Naive thymus-derived CD8-positive, alpha-beta T cell (primary cell): ENCODE measurements at regions of chr12 and their contacts with region 1.

Region 1: DNA sequence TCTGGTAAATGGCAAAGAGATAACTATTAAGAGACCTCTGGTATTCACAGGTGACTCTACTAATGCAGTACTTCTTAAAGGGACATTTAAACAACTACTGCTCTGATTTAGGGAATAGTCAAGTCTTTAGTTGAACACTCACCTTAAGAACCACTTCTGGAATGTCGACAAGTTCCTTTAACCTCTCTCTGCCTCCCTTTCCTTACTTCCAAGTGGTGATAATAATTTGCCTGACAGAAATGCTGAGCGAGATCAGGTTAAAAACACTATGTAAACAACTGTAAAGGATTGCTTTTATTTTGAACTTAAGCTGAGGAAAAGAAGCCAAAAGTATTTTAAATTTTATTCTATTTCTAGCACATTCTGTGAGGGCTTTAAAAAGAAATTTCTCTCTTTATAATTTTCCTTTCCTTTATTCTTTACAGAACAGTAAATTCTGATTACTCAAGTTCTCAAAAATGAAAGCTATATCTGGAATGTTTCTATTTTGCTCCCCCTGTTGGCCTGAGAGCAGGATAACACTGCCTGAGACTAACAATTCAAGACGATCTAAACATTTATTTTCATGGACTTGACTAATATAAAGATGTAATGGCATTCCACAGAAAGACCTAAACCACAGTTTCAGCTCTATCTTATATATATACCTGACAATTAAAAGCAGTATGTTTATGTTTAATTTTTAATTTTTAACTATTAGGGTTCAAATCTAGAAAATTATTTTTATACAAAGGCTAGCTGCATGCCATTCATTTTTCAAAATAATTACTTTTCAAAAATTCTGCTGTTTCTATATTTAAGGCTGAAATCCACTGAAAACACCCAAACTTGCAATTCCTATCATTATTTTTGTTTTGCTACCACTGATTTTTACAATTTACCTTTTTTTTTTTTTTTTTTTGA is 29.2 kb downstream of the ZCCHC8 start:
- DNase-seq: peak in 4 of 10 donors; percentile 17 to 72 (median 64)
- ATAC-seq: peak; percentile 71 to 78
- H3K4me3 Mint-ChIP-seq: no peak overlapping the region
- H3K27ac Mint-ChIP-seq: peak overlapping the region in 7 of 10 donors; percentile 14 to 79 (median 72)
- H3K4me1 Mint-ChIP-seq: peaks cover 4 to 8% (median 7%) of the 10 kb centered on the region in 4 donors
- H3K27me3 Mint-ChIP-seq: no peaks in the 10 kb centered on the region

Region 2: GRCh38 chr12:122318607-122319605 is 152.7 kb before region 1 on chr12:
- POLR2A ChIA-PET with region 1: no interaction called
- DNase-seq: no peak
- ATAC-seq: no peak
- H3K4me3 Mint-ChIP-seq: no peak overlapping the region
- H3K27ac Mint-ChIP-seq: peak overlapping the region in 2 of 10 donors; percentile 7 to 20
- H3K4me1 Mint-ChIP-seq: peaks cover 0 to 4% (median 0%) of the 10 kb centered on the region in 4 donors
- H3K27me3 Mint-ChIP-seq: no peaks in the 10 kb centered on the region

Region 3: DNA sequence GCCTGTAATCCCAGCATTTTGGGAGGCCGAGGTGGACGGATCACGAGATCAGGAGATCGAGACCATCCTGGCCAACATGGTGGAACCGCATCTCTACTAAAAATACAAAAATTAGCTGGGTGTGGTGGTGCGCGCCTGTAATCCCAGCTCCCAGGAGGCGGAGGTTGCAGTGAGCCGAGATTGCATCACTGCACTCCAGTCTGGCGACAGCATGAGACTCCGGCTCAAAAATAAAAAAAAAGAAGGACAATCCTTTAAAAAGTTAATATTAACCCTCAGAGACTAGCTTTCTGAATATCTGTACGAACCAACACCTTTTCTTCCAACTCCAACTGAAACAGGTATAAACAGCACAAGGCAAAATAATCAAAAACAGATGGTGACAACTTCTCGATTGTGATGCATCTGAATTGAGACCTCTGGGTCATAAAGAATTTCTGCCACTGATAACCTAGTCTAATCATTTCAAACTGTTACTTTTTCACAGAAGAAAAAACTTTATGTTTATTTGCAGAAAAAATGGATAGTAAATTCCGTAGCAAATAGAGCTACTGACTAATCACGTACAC is 76.9 kb before region 1 on chr12:
- POLR2A ChIA-PET with region 1: interaction called, 26 read pairs
- DNase-seq: no peak
- ATAC-seq: no peak
- H3K4me3 Mint-ChIP-seq: peak overlapping the region in 1 of 10 donors; percentile 39
- H3K27ac Mint-ChIP-seq: peak overlapping the region; percentile 34 to 95 (median 76)
- H3K4me1 Mint-ChIP-seq: peaks cover 14 to 46% (median 35%) of the 10 kb centered on the region in 4 donors
- H3K27me3 Mint-ChIP-seq: no peaks in the 10 kb centered on the region

Region 4: GRCh38 chr12:122399592-122400373 is 71.8 kb before region 1 on chr12:
- POLR2A ChIA-PET with region 1: interaction called, 26 read pairs
- DNase-seq: peak in 9 of 10 donors; percentile 26 to 75 (median 47)
- ATAC-seq: peak; percentile 85 to 88
- H3K4me3 Mint-ChIP-seq: peak overlapping the region in 6 of 10 donors; percentile 21 to 65 (median 52)
- H3K27ac Mint-ChIP-seq: peak overlapping the region; percentile 58 to 94 (median 81)
- H3K4me1 Mint-ChIP-seq: peaks cover 12 to 38% (median 26%) of the 10 kb centered on the region in 4 donors
- H3K27me3 Mint-ChIP-seq: no peaks in the 10 kb centered on the region

Region 5: DNA sequence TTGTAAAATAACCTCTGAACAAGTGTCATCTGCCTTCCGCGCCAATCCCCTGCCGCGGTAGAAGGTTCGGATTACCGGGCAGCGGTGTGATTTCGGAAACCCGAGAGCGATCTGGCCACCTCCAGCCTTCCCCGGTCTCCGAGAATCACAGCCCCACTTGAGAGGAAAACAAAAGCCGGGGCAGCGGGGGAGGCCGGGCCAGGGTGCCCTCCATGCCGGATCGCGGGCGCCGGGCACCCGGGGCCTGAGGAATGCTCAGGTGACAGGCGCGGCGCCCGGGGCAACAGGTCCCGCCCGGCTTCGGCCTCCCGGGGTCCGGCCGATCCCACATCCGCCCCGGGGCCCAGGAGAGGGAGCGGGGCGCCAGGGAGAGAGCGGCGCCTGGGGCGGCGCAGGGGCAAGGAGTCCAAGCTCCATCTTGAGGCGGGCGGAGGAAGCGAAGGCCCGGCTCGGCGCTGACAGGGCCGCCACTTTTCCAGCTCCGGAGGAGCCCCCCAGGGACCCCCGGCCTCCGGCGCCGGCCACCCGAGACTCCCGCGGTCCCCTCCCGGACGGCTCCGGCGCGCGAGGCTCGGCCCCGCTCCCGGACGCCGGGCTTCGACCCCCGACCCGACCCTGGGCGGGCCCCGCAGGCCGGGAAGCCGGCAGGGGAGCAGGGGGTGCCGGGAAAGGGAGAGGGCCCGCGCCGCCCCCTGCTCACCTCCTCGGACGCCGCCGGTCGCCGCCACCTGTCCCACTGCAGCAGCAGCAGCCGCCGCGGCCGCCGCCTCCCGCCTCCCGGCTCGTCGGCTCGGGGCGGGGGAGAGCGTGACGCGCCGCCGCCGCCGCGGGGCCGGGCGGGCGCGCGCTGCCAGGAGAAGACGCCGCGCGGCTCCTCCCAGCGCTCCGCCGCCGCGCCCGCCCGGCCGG is 49.5 kb before region 1 on chr12 and contains the start of gene CLIP1:
- POLR2A ChIA-PET with region 1: no interaction called
- DNase-seq: peak; percentile 41 to 75 (median 54)
- ATAC-seq: peak; percentile 79 to 80
- H3K4me3 Mint-ChIP-seq: peak within 1 kb of the TSS; percentile 85 to 94 (median 90)
- H3K27ac Mint-ChIP-seq: peak within 1 kb of the TSS; percentile 87 to 95 (median 92)
- H3K4me1 Mint-ChIP-seq: peaks cover 12 to 44% (median 30%) of the 10 kb centered on the region in 4 donors
- H3K27me3 Mint-ChIP-seq: no peaks in the 10 kb centered on the region
- polyA plus RNA-seq, gene CLIP1: 6.3 to 20.4 (median 9.4) TPM